ENCODE measurements at regions of chr11 and their contacts with region 1.

Region 1: DNA sequence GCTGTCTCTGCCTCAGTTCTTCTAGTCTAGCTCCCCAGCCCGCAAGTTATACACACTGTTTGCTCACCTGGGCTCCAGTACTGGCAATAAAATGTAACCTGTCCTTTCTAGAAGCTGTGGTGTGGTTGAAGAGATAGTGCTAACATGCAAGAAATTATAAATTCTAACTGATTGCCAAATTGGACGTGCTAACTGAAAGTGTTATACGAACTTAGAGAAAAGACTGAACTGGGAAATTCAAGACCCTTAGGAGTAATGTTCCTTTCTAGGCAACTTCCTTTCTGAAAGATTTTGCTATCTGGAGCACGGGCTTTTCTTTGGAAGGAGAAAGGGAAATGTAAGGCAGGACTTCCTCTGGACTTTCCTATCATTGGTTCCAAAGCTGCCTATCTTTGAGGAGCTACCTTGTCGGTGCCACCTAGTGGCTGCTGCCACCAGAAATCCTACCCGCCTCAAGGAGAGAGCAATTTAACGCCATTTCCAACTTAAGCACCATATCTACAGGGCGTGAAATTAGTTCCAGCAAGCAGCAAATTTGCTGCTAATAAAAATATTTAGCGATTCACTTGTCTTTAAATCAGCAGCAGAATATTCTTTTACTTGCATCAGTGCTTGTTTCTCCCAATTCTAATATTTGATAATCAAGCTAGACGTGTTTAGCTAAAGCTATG is 12.7 kb upstream of the TMEM218 start:
- DNase-seq: peak; percentile 42
- H3K4me3 ChIP-seq: no peak overlapping the region
- H3K27ac ChIP-seq: no peak overlapping the region
- H3K4me1 ChIP-seq: no peaks in the 10 kb centered on the region
- H3K27me3 ChIP-seq: no peaks in the 10 kb centered on the region
- CTCF ChIP-seq: peak; percentile 48
- EP300 ChIP-seq: no peak
- RAD21 ChIP-seq: 0 out of 2 replicates have a peak, but pooled peaks have one; percentile 8

Region 2: DNA sequence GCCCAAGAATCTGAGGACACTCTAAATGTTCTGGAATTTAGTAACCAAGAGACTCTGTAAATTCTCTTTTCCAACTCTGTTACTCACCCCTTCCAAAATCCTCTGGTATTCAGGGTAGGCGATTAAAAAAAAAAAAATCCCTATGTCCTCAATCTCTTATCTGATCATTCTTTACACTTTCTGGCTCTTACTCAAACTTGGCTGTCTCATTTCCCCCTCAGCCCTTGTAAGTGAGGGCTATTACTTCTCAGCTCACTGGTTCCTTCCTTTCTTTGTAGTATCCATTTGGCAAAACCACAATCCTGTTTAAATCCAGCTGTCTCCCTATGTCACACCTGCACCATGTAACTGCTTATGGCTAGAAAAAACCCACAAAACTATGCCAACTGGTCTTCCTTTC is 311.2 kb before region 1 on chr11:
- CTCF ChIA-PET with region 1: no interaction called
- POLR2A ChIA-PET with region 1: no interaction called
- DNase-seq: no peak
- H3K4me3 ChIP-seq: no peak overlapping the region
- H3K27ac ChIP-seq: no peak overlapping the region
- H3K4me1 ChIP-seq: no peaks in the 10 kb centered on the region
- H3K27me3 ChIP-seq: no peaks in the 10 kb centered on the region; the same call in 1 of the 2 replicates
- CTCF ChIP-seq: no peak
- EP300 ChIP-seq: no peak
- RAD21 ChIP-seq: no peak

Region 3: GRCh38 chr11:125111343-125112207 is 12.5 kb before region 1 on chr11 and contains the start of gene TMEM218:
- CTCF ChIA-PET with region 1: interaction called, 12 read pairs
- POLR2A ChIA-PET with region 1: no interaction called
- DNase-seq: peak; percentile 93
- H3K4me3 ChIP-seq: peak within 1 kb of the TSS; percentile 79 to 100
- H3K27ac ChIP-seq: peak within 1 kb of the TSS; percentile 46 to 84; a peak in 3 of 4 replicates
- H3K4me1 ChIP-seq: peaks cover 5 to 8% of the 10 kb centered on the region in 2 experiments; a peak in 3 of 4 replicates
- H3K27me3 ChIP-seq: no peaks in the 10 kb centered on the region
- CTCF ChIP-seq: no peak
- EP300 ChIP-seq: no peak
- RAD21 ChIP-seq: no peak
- polyA plus RNA-seq, gene TMEM218: 34.8 and 36.2 TPM in 2 replicates

Region 4: GRCh38 chr11:125154378-125155099 is 30.5 kb after region 1 on chr11:
- CTCF ChIA-PET with region 1: no interaction called
- POLR2A ChIA-PET with region 1: no interaction called
- DNase-seq: no peak
- H3K4me3 ChIP-seq: no peak overlapping the region
- H3K27ac ChIP-seq: no peak overlapping the region
- H3K4me1 ChIP-seq: peaks cover 0 to 8% of the 10 kb centered on the region in 2 experiments; a peak in 1 of 4 replicates
- H3K27me3 ChIP-seq: peaks cover 11% of the 10 kb centered on the region; the same call in 1 of the 2 replicates
- CTCF ChIP-seq: no peak
- EP300 ChIP-seq: no peak
- RAD21 ChIP-seq: no peak

Measured in SK-N-SH (cell line).